ENCODE measurements at regions of chr12 and their contacts with region 1.

Region 1: GRCh38 chr12:124036674-124037109 is 63.7 kb downstream of the ZNF664 start:
- DNase-seq: peak in 4 of 5 donors; percentile 35 to 45 (median 42)
- H3K4me3 ChIP-seq: no peak overlapping the region
- H3K4me3 Mint-ChIP-seq: no peak overlapping the region
- H3K27ac ChIP-seq: no peak overlapping the region
- H3K27ac Mint-ChIP-seq: no peak overlapping the region
- H3K4me1 ChIP-seq: no peaks in the 10 kb centered on the region
- H3K4me1 Mint-ChIP-seq: no peaks in the 10 kb centered on the region
- H3K27me3 ChIP-seq: no peaks in the 10 kb centered on the region
- H3K27me3 Mint-ChIP-seq: peaks cover 4% of the 10 kb centered on the region in 2 donors

Region 2: DNA sequence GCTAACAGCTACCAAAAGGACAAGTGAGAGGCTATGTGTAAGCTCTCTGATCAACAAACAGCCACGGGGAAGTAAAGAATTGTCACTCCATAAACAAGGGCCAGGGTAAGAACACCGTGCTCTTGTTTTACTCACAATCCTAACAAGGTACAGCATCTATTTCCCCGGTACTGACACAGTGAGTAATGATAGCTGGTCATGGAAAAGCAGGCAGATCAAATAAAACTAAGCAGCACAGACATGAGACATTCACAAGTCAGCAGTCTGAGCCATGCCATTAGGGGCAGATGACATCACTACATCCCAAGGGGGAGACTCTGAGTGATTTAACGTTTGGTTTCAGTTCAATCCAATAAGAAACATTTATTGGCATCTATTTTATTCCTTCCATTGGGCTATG is 1001.8 kb before region 1 on chr12:
- CTCF ChIA-PET with region 1: no interaction called
- POLR2A ChIA-PET with region 1: no interaction called
- intact Hi-C with region 1: no loop called
- DNase-seq: no peak
- H3K4me3 ChIP-seq: no peak overlapping the region
- H3K4me3 Mint-ChIP-seq: no peak overlapping the region
- H3K27ac ChIP-seq: no peak overlapping the region
- H3K27ac Mint-ChIP-seq: peak overlapping the region in 1 of 7 donors; percentile 81
- H3K4me1 ChIP-seq: peaks cover 9% of the 10 kb centered on the region
- H3K4me1 Mint-ChIP-seq: peaks cover 8 to 21% (median 14%) of the 10 kb centered on the region in 4 donors
- H3K27me3 ChIP-seq: no peaks in the 10 kb centered on the region
- H3K27me3 Mint-ChIP-seq: no peaks in the 10 kb centered on the region

Region 3: GRCh38 chr12:124774462-124775167 is 737.9 kb after region 1 on chr12:
- CTCF ChIA-PET with region 1: interaction called, 119 read pairs
- POLR2A ChIA-PET with region 1: interaction called, 3 read pairs
- intact Hi-C with region 1: loop called (anchors 1 kb)
- DNase-seq: peak; percentile 26 to 67 (median 38)
- H3K4me3 ChIP-seq: peak overlapping the region; percentile 23 to 42
- H3K4me3 Mint-ChIP-seq: peak overlapping the region; percentile 64 to 89 (median 80)
- H3K27ac ChIP-seq: no peak overlapping the region
- H3K27ac Mint-ChIP-seq: peak overlapping the region in 4 of 7 donors; percentile 1 to 77 (median 28)
- H3K4me1 ChIP-seq: peaks cover 20% of the 10 kb centered on the region
- H3K4me1 Mint-ChIP-seq: peaks cover 19 to 24% (median 20%) of the 10 kb centered on the region in 4 donors
- H3K27me3 ChIP-seq: no peaks in the 10 kb centered on the region
- H3K27me3 Mint-ChIP-seq: peaks cover 2 to 7% of the 10 kb centered on the region in 2 donors

Measured in CD4-positive, alpha-beta memory T cell (primary cell).